PC-3 (cell line): ENCODE measurements at regions of chr9 and their contacts with region 1.

Region 1: DNA sequence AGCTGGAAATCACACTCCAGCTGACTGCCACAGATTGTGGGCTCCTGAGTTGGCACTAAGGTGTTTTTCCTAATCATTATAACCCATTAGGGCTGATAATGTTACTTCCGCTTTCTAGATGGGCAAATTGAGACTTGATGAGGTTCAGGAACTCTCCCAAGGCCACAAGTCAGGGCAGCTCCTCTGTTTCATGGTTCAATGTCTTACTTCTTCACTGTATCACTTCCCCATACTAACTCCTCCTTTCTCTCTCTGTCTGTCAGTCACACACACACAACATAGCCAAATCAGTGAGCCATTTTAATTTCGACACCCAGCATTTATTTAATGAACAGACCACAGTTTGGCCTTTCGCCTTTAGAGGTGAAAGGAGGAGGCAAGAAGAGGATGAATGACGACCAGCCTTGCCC is 17.8 kb upstream of the TRAF1 start:
- DNase-seq: no peak
- ATAC-seq: no peak
- H3K4me3 ChIP-seq: no peak overlapping the region
- H3K27ac ChIP-seq: no peak overlapping the region
- H3K4me1 ChIP-seq: peaks cover 58% of the 10 kb centered on the region
- H3K27me3 ChIP-seq: no peaks in the 10 kb centered on the region
- CTCF ChIP-seq: no peak

Region 2: DNA sequence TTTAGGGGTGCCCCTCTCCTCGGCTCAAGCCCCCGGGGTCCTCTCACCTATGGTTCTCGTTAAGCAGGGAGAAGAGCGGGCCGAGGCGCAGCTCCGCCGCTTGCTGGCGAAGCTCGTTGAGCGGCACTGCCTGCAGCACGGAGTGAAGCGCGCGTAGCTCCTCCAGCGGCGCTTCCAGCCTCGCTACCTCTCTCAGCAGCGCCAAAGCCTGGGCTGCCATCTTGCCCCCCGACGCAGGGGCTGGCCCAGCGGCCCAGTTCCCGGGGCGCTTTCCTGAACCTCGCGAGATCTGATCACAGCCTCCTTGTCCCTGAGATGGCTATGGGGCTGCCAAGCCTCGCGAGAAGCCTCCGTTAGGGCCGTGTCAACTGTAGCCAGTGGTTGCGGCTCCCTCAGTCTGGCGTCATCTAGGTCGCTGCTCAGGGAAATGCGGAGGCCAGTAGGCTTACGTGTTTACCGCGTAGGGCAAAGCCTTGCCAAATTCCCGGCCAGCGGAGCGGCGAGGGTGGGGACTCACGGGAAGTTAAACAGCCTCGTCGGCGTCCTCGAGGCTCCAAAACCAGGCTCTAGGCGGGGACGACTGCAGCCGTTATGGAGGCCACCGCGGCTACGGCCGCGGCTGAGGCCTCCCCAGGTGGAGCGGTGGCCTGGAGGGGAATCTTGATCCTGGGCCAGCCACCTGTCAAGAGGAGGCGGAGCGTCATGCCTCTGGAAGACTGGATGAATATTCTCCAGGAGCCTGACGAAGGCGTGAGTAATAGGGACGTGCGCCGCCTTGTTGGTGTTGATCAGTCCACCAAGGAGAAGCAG is 101.5 kb before region 1 on chr9 and contains the start of gene PSMD5:
- CTCF ChIA-PET with region 1: no interaction called
- POLR2A ChIA-PET with region 1: interaction called, 12 read pairs
- intact Hi-C with region 1: no loop called
- DNase-seq: peak; percentile 98
- ATAC-seq: peak; percentile 98
- H3K4me3 ChIP-seq: peak within 1 kb of the TSS; percentile 89
- H3K27ac ChIP-seq: peak within 1 kb of the TSS; percentile 90
- H3K4me1 ChIP-seq: no peaks in the 10 kb centered on the region; the same call in none of the 2 replicates
- H3K27me3 ChIP-seq: no peaks in the 10 kb centered on the region
- CTCF ChIP-seq: no peak
- total RNA-seq, gene PSMD5: 19.1 and 23.4 TPM in 2 replicates